ENCODE measurements at regions of chr1 and their contacts with region 1.

Region 1: DNA sequence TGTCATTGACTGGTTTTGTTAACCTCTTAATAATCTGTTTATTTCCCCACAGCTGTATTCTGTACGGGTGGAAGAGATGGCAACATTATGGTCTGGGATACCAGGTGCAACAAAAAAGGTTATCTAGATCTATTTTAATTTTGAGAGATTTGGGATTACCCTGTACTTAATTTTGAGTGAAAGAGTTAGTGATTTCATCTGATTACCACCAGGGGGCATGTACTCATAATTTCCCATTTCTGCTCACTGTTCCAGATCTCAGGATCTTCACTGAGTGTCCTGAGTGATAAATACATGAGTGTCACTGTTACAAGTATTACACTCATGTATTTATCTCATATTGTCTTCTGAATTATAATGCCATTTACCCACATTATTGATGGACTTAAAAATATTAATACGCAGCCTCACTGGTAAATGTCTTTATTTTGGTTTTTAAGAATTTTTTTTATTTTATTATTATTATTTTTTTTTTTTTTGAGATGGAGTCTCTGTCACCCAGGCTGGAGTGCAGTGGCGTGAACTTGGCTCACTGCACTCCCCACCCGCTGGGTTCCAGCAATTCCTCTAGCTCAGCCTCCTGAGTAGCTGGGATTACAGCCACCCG is 27.4 kb downstream of the DTL start:
- DNase-seq: no peak
- ATAC-seq: peak; percentile 37
- H3K4me3 Mint-ChIP-seq: no peak overlapping the region
- H3K27ac Mint-ChIP-seq: no peak overlapping the region
- H3K4me1 Mint-ChIP-seq: no peaks in the 10 kb centered on the region
- H3K27me3 Mint-ChIP-seq: no peaks in the 10 kb centered on the region
- CTCF ChIP-seq: peak; percentile 36

Region 2: DNA sequence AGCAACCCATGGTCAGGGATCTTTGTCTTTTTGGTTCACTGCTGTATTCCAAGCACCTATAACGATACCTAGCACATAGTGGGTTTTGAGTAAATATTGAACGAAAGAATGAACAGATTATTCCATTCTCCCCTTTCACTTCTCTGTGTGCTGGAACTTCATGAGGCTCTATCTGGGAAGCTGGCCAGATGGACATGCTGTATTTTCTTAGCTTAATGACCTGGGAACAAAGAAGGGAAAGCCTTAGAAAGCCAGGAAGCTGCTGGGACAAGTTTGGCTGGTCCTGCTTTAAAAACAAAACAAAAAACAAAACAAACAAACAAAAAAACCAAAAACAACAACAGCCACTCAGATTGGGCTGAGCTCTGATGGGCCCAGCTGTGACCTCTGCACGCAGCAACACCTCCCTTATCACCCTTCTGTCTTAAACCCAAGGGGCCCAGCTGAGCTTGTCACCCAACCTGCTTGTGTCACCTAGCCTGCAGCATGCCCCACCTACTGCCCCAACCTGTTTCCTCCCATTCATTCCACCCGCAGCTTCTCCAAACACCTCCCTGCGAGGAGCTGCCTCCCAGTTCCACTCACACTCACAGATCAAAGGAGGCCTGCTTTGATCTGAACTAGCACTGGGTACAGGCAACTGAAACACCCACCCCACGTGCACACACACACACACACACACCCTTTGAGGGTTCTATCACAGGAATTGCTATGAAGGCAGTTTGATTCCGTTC is 521.0 kb before region 1 on chr1:
- CTCF ChIA-PET with region 1: no interaction called
- POLR2A ChIA-PET with region 1: no interaction called
- intact Hi-C with region 1: no loop called
- DNase-seq: no peak
- ATAC-seq: no peak
- H3K4me3 Mint-ChIP-seq: no peak overlapping the region
- H3K27ac Mint-ChIP-seq: no peak overlapping the region
- H3K4me1 Mint-ChIP-seq: no peaks in the 10 kb centered on the region
- H3K27me3 Mint-ChIP-seq: peaks cover 13% of the 10 kb centered on the region
- CTCF ChIP-seq: no peak

Region 3: GRCh38 chr1:212089560-212090163 is 26.7 kb after region 1 on chr1:
- CTCF ChIA-PET with region 1: interaction called, 3 read pairs
- POLR2A ChIA-PET with region 1: interaction called, 11 read pairs
- intact Hi-C with region 1: no loop called
- DNase-seq: no peak
- ATAC-seq: no peak
- H3K4me3 Mint-ChIP-seq: no peak overlapping the region
- H3K27ac Mint-ChIP-seq: peak overlapping the region; percentile 13
- H3K4me1 Mint-ChIP-seq: peaks cover 12% of the 10 kb centered on the region
- H3K27me3 Mint-ChIP-seq: no peaks in the 10 kb centered on the region
- CTCF ChIP-seq: no peak

Region 4: DNA sequence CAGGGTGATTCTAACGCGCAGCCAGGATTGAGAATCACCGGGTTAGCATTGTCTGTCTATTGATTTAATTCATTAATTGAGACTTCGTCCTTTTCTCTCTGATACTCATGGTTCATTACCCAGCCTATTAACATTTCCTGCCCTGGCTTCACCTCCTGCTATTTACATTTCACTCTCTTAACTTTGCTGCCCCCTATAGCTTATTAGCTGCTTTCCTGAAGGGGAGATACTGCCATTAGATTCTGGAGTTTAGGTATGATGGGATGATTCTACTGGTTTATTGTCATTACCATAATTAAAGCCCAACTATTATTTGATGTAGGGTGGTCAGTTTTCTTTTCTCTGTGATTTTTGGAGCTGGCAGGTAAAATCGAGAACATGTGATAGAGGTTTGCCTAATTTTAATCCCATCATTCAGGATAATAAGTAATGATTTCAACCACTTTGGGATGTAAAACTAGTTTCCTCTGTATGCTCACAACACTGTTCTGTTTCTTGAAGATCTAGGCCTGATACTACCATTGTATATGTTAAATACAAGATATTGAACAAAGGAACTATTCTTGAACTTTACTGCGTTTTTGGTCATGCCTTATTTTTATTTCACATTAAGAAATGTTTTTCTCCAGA is 228.7 kb after region 1 on chr1:
- CTCF ChIA-PET with region 1: interaction called, 40 read pairs
- POLR2A ChIA-PET with region 1: interaction called, 7 read pairs
- intact Hi-C with region 1: loop called (anchors 1 kb)
- DNase-seq: no peak
- ATAC-seq: peak; percentile 91
- H3K4me3 Mint-ChIP-seq: peak overlapping the region; percentile 2
- H3K27ac Mint-ChIP-seq: no peak overlapping the region
- H3K4me1 Mint-ChIP-seq: peaks cover 78% of the 10 kb centered on the region
- H3K27me3 Mint-ChIP-seq: no peaks in the 10 kb centered on the region
- CTCF ChIP-seq: peak; percentile 44

Region 5: GRCh38 chr1:212368073-212368484 is 305.1 kb after region 1 on chr1:
- CTCF ChIA-PET with region 1: interaction called, 28 read pairs
- POLR2A ChIA-PET with region 1: no interaction called
- intact Hi-C with region 1: loop called (anchors 1 kb)
- DNase-seq: no peak
- ATAC-seq: peak; percentile 89
- H3K4me3 Mint-ChIP-seq: no peak overlapping the region
- H3K27ac Mint-ChIP-seq: no peak overlapping the region
- H3K4me1 Mint-ChIP-seq: no peaks in the 10 kb centered on the region
- H3K27me3 Mint-ChIP-seq: no peaks in the 10 kb centered on the region
- CTCF ChIP-seq: peak; percentile 25

Region 6: GRCh38 chr1:212782422-212783154 is 719.7 kb after region 1 on chr1:
- CTCF ChIA-PET with region 1: no interaction called
- POLR2A ChIA-PET with region 1: no interaction called
- intact Hi-C with region 1: loop called (anchors 10 kb)
- DNase-seq: no peak
- ATAC-seq: peak; percentile 66
- H3K4me3 Mint-ChIP-seq: no peak overlapping the region
- H3K27ac Mint-ChIP-seq: no peak overlapping the region
- H3K4me1 Mint-ChIP-seq: peaks cover 2% of the 10 kb centered on the region
- H3K27me3 Mint-ChIP-seq: no peaks in the 10 kb centered on the region
- CTCF ChIP-seq: peak; percentile 80

Measured in activated B cell treated with CpG ODN at 0.5 μM for 24 hours (primary cell).